Stomach (tissue), 19 donors: ENCODE measurements at regions of chr21 and their contacts with region 1.

Region 1: DNA sequence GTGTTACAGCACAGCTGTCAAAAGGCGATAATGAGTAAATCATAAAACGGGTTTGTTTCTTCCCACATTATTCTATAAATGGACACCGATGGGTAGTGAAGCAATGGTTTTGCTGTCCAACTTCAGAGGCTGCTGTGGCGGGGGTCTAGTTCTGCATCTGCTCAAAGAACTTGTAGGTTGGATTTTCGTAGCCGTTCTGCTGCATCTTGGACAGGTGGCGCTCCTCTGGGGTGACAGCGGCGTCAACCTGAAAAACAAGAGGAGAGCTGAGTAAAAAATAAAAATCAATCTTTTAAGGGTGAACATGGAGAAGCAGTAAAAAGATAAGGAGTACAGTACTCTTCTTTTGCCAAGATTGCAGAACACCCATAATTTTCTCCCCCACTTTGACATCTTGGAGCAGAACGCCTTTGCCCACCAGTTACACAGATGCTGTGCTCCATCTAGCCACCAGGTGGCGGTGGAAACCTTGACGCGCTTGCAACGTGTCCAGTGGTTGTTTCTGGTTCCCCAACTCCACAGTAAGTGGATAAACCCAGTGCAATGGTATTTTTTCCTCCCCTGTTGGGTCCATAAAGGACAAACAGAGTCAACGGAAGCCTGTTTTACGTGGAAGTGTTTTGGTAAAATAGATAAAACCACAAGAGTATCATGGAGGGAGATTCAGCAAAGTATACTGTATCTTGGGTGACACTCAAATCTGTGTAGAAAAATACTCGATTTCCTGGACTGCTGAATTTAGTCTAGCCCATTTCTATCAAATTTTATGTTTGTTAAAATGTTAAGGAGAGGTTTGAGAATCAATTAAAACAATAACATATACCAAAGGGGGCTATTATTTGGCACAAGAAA is 147.0 kb downstream of the GABPA start:
- DNase-seq: peak; percentile 75 to 87
- H3K4me3 ChIP-seq: no peak overlapping the region
- H3K27ac ChIP-seq: no peak overlapping the region
- H3K4me1 ChIP-seq: no peaks in the 10 kb centered on the region
- H3K27me3 ChIP-seq: no peaks in the 10 kb centered on the region
- CTCF ChIP-seq: peak in 5 of 7 experiments; percentile 84 to 93 (median 90)
- EP300 ChIP-seq: no peak
- POLR2A ChIP-seq: no peak

Region 2: DNA sequence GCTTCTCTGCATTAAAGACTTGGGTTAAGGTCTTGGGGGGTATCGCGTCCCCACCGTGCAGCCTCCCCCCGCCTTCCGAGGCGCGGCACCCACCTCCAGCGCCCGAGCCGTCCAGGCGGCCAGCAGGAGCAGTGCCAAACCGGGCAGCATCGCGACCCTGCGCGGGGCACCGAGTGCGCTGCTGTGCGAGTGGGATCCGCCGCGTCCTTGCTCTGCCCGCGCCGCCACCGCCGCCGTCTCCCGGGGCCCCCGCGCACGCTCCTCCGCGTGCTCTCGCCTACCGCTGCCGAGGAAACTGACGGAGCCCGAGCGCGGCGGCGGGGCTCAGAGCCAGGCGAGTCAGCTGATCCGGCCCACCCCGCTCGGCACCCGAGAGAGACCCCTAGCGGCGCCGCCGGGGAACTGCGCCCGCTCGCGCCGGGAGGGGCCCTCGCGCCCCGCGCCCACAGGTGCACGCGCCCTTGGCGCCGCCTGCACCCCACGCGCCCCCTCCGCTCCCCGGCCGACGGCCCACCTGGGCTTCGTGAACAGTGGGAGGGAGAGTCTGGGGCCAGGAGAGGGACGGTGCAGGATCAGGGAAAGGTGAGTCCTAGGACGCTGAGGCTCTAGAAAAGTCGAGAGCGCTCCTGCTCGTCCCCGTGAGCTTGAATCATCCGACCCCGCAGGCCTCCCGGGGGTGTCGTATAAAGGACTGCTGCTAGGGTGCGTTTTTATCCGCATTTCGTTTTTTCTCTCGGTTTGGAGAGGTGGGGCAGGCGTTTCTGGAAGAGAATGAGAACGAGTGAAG is 288.9 kb after region 1 on chr21 and contains the start of gene APP:
- intact Hi-C with region 1: loop called (anchors 5 kb)
- DNase-seq: peak; percentile 91 to 96
- H3K4me3 ChIP-seq: peak within 1 kb of the TSS; percentile 89 to 97 (median 93)
- H3K27ac ChIP-seq: peak within 1 kb of the TSS; percentile 77 to 92 (median 91)
- H3K4me1 ChIP-seq: peaks cover 15 to 43% (median 34%) of the 10 kb centered on the region in 4 donors
- H3K27me3 ChIP-seq: no peaks in the 10 kb centered on the region
- CTCF ChIP-seq: peak in 5 of 7 experiments; percentile 41 to 100 (median 96)
- EP300 ChIP-seq: no peak
- POLR2A ChIP-seq: peak in 1 of 4 donors; percentile 43
- total RNA-seq, gene APP: 190 to 408 (median 266) TPM

Region 3: GRCh38 chr21:26709090-26709489 is 827.3 kb after region 1 on chr21:
- intact Hi-C with region 1: loop called (anchors 10 kb)
- DNase-seq: no peak
- H3K4me3 ChIP-seq: no peak overlapping the region
- H3K27ac ChIP-seq: no peak overlapping the region
- H3K4me1 ChIP-seq: no peaks in the 10 kb centered on the region
- H3K27me3 ChIP-seq: no peaks in the 10 kb centered on the region
- CTCF ChIP-seq: no peak
- EP300 ChIP-seq: no peak
- POLR2A ChIP-seq: no peak